Breast epithelium (tissue), 4 donors: ENCODE measurements at regions of chr9 and their contacts with region 1.

Region 1: DNA sequence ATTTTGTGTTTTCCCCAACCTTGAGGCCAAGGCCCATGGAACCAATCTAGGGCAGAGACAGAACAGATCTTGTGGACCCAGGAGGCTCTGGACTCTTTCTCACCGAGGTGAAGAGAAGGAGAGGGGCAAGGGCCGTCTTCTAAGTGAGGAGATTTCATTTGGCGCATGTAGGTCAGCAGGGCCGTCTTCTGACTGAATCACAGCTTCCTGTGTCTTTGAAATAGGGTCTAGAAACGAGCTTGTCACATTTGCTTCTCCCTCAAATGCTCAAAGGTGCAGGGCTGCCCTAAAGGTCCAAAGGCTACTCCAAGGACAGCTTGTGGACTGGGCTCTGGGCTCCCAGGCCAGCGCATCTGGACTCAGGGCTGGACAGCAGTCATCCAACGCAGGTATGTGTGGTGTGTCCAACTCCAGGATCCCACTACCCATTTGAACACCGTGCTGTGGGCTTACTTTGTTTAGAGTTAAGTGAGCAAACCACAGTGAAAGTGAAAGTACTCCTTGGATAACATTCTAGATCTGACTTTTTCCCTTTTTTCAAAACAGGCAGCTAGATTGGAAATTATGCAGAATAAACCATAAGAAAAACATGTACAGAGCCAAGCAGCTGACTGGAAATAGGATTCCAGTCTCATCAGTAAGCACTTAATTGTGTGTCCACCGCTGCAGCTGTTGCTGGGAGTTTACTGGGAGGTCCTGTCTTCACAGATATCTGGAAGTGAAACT is 357.0 kb downstream of the GADD45G start:
- DNase-seq: no peak
- H3K4me3 ChIP-seq: peak overlapping the region in 2 of 3 donors; percentile 2 to 9
- H3K27ac ChIP-seq: no peak overlapping the region
- H3K4me1 ChIP-seq: no peaks in the 10 kb centered on the region
- H3K27me3 ChIP-seq: no peaks in the 10 kb centered on the region
- CTCF ChIP-seq: no peak
- POLR2A ChIP-seq: no peak

Region 2: GRCh38 chr9:89878687-89879086 is 83.1 kb before region 1 on chr9:
- intact Hi-C with region 1: no loop called
- DNase-seq: peak; percentile 44 to 84
- H3K4me3 ChIP-seq: no peak overlapping the region
- H3K27ac ChIP-seq: peak overlapping the region in 1 of 2 donors; percentile 21
- H3K4me1 ChIP-seq: no peaks in the 10 kb centered on the region
- H3K27me3 ChIP-seq: no peaks in the 10 kb centered on the region
- CTCF ChIP-seq: no peak
- POLR2A ChIP-seq: no peak

Region 3: GRCh38 chr9:89899266-89899972 is 62.4 kb before region 1 on chr9:
- intact Hi-C with region 1: loop called (anchors 2 kb)
- DNase-seq: no peak
- H3K4me3 ChIP-seq: no peak overlapping the region
- H3K27ac ChIP-seq: no peak overlapping the region
- H3K4me1 ChIP-seq: no peaks in the 10 kb centered on the region
- H3K27me3 ChIP-seq: no peaks in the 10 kb centered on the region
- CTCF ChIP-seq: no peak
- POLR2A ChIP-seq: no peak